AG04450 (cell line): ENCODE measurements at regions of chr14 and their contacts with region 1.

Region 1: DNA sequence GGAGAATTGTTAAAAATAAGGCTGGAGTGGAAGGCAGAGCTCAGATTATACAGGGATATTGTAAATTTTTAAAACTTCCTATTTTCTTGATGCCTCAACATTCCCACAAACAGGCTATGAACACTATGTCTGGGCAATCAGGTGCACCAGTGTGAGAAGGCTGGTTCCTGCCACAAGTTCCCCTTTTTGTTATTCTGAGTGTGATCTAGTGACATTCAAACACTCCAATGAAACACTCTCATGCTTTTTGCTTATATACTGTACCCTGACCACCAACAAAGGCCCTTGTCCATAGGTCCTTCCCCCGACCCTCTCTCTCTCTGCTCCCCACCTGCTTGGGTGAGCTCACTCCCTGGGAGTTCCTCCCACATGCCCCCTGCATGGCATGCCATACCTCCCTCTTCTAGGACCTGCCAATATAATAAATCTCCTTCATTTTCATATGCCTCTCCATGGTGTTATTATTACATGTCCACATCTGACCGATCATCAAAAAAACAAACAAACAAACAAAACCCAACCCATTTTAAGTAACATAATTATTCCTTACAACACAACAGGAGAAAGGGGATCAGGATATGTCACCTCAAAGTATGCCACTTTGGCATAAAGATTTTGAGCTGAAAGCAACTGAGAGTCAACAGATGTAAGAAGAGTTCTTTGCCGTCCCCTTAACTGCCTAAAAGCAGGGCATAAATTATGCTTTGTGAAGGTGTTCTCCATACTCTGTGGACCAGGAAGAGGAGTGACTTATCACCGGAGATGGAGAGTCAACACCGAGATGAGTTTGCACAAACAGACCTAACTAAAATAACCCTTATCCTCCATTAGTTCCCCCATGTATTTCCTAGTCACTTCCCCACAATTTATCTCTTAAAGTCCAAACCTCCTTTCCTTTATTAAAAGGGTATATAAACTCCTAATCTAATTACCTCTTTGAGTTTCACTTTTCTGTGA is 42.5 kb upstream of the CATSPERB start:
- DNase-seq: no peak
- H3K4me3 ChIP-seq: no peak overlapping the region
- H3K27ac ChIP-seq: no peak overlapping the region
- H3K27me3 ChIP-seq: no peaks in the 10 kb centered on the region
- CTCF ChIP-seq: no peak

Region 2: DNA sequence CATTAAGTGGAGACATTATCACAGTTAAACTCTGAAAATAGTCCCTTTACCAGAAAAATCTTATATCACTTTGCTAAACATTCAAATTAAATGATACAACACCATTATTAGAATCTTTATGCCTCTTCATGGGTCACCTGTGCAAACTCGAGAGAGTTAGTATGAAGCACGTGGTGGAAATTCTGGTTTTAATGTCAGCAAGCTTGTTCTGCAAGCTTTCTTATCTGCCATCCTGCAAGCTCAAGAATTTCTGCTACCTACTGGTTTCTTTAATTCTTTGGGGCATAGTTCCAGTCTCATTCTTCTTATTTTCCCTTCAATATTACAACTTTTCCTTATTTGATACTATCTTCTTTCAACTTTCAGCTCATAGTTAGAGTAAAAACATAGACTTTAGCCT is 43.4 kb before region 1 on chr14:
- CTCF ChIA-PET with region 1: no interaction called
- POLR2A ChIA-PET with region 1: interaction called, 14 read pairs
- DNase-seq: no peak
- H3K4me3 ChIP-seq: no peak overlapping the region
- H3K27ac ChIP-seq: no peak overlapping the region
- H3K27me3 ChIP-seq: no peaks in the 10 kb centered on the region
- CTCF ChIP-seq: no peak